CD4-positive, alpha-beta T cell (primary cell): ENCODE measurements at regions of chr17 and their contacts with region 1.

Region 1: DNA sequence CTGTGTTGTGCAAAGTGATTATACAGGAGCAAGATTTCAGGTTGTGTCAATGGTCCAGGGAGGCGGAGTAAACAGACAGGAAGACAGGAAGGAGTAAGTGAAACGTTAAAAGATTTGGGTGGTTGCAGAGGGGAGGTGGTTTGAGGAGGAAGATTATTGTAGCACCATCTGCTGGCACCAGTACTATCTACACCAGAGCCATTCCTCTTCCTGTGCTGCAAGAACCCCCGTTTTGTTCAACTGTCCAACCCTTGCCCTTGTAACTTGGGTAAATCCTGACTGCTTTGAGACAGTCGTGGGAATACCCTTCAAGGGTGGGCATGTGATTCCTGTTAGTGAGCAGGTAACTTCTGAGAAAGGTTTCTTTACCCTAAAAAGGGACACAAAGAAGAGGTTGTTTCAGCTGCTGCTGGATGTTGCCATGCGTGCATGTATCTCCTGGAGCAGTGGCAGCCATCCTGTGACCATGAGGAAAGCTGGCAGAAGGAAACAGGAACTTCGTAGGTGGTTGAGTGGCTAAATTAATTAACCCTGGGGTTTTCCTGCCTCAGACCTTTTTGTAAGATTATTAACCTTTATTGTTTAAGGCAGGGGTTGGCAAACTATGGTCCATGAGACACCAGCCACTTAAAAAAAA is 124.1 kb downstream of the PRKCA start:
- DNase-seq: peak in 13 of 14 experiments; percentile 11 to 81 (median 34)
- ATAC-seq: peak; percentile 98
- H3K4me3 ChIP-seq: no peak overlapping the region
- H3K4me3 Mint-ChIP-seq: peak overlapping the region; percentile 43
- H3K27ac ChIP-seq: no peak overlapping the region
- H3K27ac Mint-ChIP-seq: peak overlapping the region; percentile 59
- H3K4me1 ChIP-seq: peaks cover 26% of the 10 kb centered on the region
- H3K4me1 Mint-ChIP-seq: peaks cover 75% of the 10 kb centered on the region
- H3K27me3 ChIP-seq: no peaks in the 10 kb centered on the region
- H3K27me3 Mint-ChIP-seq: no peaks in the 10 kb centered on the region
- CTCF ChIP-seq: peak; percentile 69

Region 2: DNA sequence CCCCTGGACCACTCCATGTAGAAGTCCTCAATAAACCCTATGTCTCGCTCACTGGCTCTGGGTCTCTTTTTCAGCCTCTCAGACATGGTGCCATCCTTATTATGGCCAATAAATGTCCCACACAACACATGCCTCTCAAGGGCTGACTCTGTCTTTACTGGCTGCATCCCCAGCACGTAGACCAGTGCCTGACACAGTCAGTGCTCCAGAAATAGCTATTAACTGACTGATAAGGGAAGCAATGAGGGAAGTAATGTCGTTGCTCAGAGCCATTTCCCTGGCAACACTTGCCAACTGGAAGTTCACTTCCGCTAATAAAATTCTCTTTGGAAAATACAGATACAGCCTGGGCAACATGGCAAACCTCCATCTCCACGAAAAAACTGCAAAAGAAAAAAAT is 178.2 kb before region 1 on chr17:
- CTCF ChIA-PET with region 1: no interaction called
- POLR2A ChIA-PET with region 1: no interaction called
- intact Hi-C with region 1: loop called in 1 of 2 experiments (anchors 2 kb)
- DNase-seq: no peak
- ATAC-seq: no peak
- H3K4me3 ChIP-seq: no peak overlapping the region
- H3K4me3 Mint-ChIP-seq: no peak overlapping the region
- H3K27ac ChIP-seq: no peak overlapping the region
- H3K27ac Mint-ChIP-seq: peak overlapping the region; percentile 61
- H3K4me1 ChIP-seq: peaks cover 36% of the 10 kb centered on the region
- H3K4me1 Mint-ChIP-seq: peaks cover 38% of the 10 kb centered on the region
- H3K27me3 ChIP-seq: no peaks in the 10 kb centered on the region
- H3K27me3 Mint-ChIP-seq: no peaks in the 10 kb centered on the region
- CTCF ChIP-seq: no peak

Region 3: GRCh38 chr17:66255112-66255511 is 171.4 kb before region 1 on chr17:
- CTCF ChIA-PET with region 1: interaction called, 3 read pairs
- POLR2A ChIA-PET with region 1: interaction called, 3 read pairs
- intact Hi-C with region 1: loop called (anchors 1 kb)
- DNase-seq: peak in 8 of 14 experiments; percentile 21 to 87 (median 42)
- ATAC-seq: peak; percentile 95
- H3K4me3 ChIP-seq: no peak overlapping the region
- H3K4me3 Mint-ChIP-seq: peak overlapping the region; percentile 59
- H3K27ac ChIP-seq: peak overlapping the region in 1 of 2 donors; percentile 15
- H3K27ac Mint-ChIP-seq: peak overlapping the region; percentile 82
- H3K4me1 ChIP-seq: peaks cover 8% of the 10 kb centered on the region
- H3K4me1 Mint-ChIP-seq: peaks cover 23% of the 10 kb centered on the region
- H3K27me3 ChIP-seq: no peaks in the 10 kb centered on the region
- H3K27me3 Mint-ChIP-seq: no peaks in the 10 kb centered on the region
- CTCF ChIP-seq: peak; percentile 82

Region 4: DNA sequence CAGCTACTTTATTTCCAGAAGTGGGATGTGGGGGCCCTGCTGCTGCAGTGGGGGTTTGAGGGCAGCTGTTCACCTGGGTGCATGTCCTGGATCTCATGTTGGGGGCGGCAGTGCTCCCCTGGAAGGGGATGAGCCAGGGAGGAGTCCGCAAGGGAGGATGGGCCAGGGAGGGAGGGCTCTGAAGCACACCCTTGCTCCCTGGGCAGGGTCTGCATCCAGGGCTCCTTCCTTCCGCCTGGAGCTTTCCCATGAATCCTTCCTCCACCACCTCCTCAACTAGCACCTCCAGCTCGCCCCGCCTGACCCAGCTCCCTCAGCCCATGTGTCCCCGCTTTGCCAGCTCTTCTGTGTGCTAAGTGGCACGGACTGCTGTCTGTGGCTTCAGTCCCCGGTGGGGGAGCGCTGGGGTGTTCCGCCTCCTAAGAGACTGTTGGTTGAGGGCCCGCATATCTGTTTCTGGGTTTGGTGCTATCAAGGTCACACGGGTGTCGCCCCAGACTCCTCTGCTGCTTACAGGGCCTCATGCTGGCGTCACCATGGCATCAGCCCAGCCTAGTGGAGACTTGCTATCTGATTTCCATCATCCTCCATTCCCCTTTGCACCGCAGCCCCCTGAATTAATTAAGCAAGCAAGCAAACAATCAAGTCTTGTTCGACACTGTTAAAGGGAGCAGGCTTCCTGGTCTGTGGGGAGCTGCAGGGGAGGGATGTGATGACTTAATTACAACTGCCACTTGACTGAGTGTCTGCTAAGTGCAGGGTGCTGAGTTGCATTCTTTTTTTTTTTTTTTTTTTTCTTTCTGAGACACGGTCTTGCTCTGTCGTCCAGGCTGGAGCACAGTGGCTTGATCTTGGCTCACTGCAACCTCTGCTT is 52.3 kb before region 1 on chr17:
- CTCF ChIA-PET with region 1: no interaction called
- POLR2A ChIA-PET with region 1: no interaction called
- intact Hi-C with region 1: loop called in 1 of 2 experiments (anchors 5 kb)
- DNase-seq: peak; percentile 22 to 72 (median 40)
- ATAC-seq: peak; percentile 91
- H3K4me3 ChIP-seq: no peak overlapping the region
- H3K4me3 Mint-ChIP-seq: peak overlapping the region; percentile 59
- H3K27ac ChIP-seq: no peak overlapping the region
- H3K27ac Mint-ChIP-seq: peak overlapping the region; percentile 79
- H3K4me1 ChIP-seq: peaks cover 23% of the 10 kb centered on the region
- H3K4me1 Mint-ChIP-seq: peaks cover 83% of the 10 kb centered on the region
- H3K27me3 ChIP-seq: no peaks in the 10 kb centered on the region
- H3K27me3 Mint-ChIP-seq: no peaks in the 10 kb centered on the region
- CTCF ChIP-seq: no peak

Region 5: DNA sequence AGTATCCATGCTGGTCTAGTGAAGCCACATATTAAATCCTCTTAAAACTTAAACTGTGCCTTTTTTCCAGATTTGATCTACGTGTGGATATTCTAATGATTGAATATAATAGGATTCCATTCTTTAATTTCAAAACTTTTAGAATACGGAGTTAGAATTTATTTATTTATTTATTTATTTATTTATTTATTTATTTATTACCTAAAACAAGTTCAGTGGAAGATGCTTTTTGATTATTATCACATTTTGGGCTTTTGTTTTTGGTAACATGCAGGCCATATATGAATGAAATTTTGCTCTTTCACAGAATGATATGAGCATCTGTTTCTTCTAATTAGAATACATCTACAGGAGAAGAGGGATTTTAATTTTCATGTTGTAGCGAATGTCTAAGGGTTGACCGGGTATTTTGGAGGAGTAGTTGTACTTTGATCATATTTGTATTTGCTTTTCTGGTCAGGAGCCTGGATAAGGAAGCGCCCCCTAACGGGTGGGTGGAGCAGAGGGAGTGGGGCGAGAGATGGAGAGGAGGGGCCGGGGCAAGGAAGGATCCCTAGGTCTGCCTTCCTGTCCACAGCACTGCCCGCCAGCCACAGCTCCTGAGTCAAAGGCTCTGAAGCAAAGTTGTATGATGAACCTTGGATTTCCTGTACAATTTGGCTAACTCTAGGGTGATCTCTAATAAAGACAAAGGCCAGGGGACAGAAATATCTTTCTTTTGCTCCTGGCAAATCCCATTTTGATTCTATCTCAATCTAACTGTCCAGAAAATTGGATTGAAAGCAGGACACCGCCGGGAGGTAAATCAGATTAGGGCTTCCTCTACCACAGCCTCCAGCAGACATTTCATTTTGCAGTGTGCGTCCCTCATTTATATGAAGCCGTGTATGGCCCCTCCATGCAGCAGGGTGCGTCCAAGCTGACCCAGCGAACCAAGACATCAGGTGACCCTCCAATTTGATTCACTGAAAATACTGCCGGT is 25.0 kb after region 1 on chr17:
- CTCF ChIA-PET with region 1: no interaction called
- POLR2A ChIA-PET with region 1: no interaction called
- intact Hi-C with region 1: no loop called
- DNase-seq: peak in 1 of 14 experiments; percentile 23
- ATAC-seq: no peak
- H3K4me3 ChIP-seq: no peak overlapping the region
- H3K4me3 Mint-ChIP-seq: no peak overlapping the region
- H3K27ac ChIP-seq: no peak overlapping the region
- H3K27ac Mint-ChIP-seq: peak overlapping the region; percentile 79
- H3K4me1 ChIP-seq: peaks cover 2% of the 10 kb centered on the region
- H3K4me1 Mint-ChIP-seq: peaks cover 86% of the 10 kb centered on the region
- H3K27me3 ChIP-seq: no peaks in the 10 kb centered on the region
- H3K27me3 Mint-ChIP-seq: no peaks in the 10 kb centered on the region
- CTCF ChIP-seq: no peak

Region 6: GRCh38 chr17:66533572-66533971 is 107.1 kb after region 1 on chr17:
- CTCF ChIA-PET with region 1: no interaction called
- POLR2A ChIA-PET with region 1: no interaction called
- intact Hi-C with region 1: no loop called
- DNase-seq: no peak
- ATAC-seq: no peak
- H3K4me3 ChIP-seq: no peak overlapping the region
- H3K4me3 Mint-ChIP-seq: no peak overlapping the region
- H3K27ac ChIP-seq: no peak overlapping the region
- H3K27ac Mint-ChIP-seq: no peak overlapping the region
- H3K4me1 ChIP-seq: peaks cover 6% of the 10 kb centered on the region
- H3K4me1 Mint-ChIP-seq: peaks cover 80% of the 10 kb centered on the region
- H3K27me3 ChIP-seq: no peaks in the 10 kb centered on the region
- H3K27me3 Mint-ChIP-seq: no peaks in the 10 kb centered on the region
- CTCF ChIP-seq: no peak

Region 7: GRCh38 chr17:66567234-66568170 is 141.0 kb after region 1 on chr17:
- CTCF ChIA-PET with region 1: no interaction called
- POLR2A ChIA-PET with region 1: no interaction called
- intact Hi-C with region 1: loop called (anchors 1 to 5 kb)
- DNase-seq: peak; percentile 71 to 90 (median 80)
- ATAC-seq: peak; percentile 88
- H3K4me3 ChIP-seq: no peak overlapping the region
- H3K4me3 Mint-ChIP-seq: no peak overlapping the region
- H3K27ac ChIP-seq: no peak overlapping the region
- H3K27ac Mint-ChIP-seq: peak overlapping the region; percentile 7
- H3K4me1 ChIP-seq: peaks cover 5% of the 10 kb centered on the region
- H3K4me1 Mint-ChIP-seq: peaks cover 41% of the 10 kb centered on the region
- H3K27me3 ChIP-seq: no peaks in the 10 kb centered on the region
- H3K27me3 Mint-ChIP-seq: no peaks in the 10 kb centered on the region
- CTCF ChIP-seq: peak; percentile 87

Region 8: GRCh38 chr17:66673668-66674315 is 247.3 kb after region 1 on chr17:
- CTCF ChIA-PET with region 1: interaction called, 3 read pairs
- POLR2A ChIA-PET with region 1: no interaction called
- intact Hi-C with region 1: loop called (anchors 5 to 10 kb)
- DNase-seq: peak; percentile 20 to 90 (median 44)
- ATAC-seq: peak; percentile 84
- H3K4me3 ChIP-seq: no peak overlapping the region
- H3K4me3 Mint-ChIP-seq: peak overlapping the region; percentile 52
- H3K27ac ChIP-seq: peak overlapping the region; percentile 51 to 78
- H3K27ac Mint-ChIP-seq: peak overlapping the region; percentile 88
- H3K4me1 ChIP-seq: peaks cover 22% of the 10 kb centered on the region
- H3K4me1 Mint-ChIP-seq: peaks cover 55% of the 10 kb centered on the region
- H3K27me3 ChIP-seq: no peaks in the 10 kb centered on the region
- H3K27me3 Mint-ChIP-seq: no peaks in the 10 kb centered on the region
- CTCF ChIP-seq: peak; percentile 68

Region 9: GRCh38 chr17:66834918-66835454 is 408.5 kb after region 1 on chr17 and contains the start of gene CACNG5:
- CTCF ChIA-PET with region 1: no interaction called
- POLR2A ChIA-PET with region 1: no interaction called
- intact Hi-C with region 1: no loop called
- DNase-seq: no peak
- ATAC-seq: no peak
- H3K4me3 ChIP-seq: no peak within 1 kb of the TSS
- H3K4me3 Mint-ChIP-seq: no peak within 1 kb of the TSS
- H3K27ac ChIP-seq: no peak within 1 kb of the TSS
- H3K27ac Mint-ChIP-seq: no peak within 1 kb of the TSS
- H3K4me1 ChIP-seq: no peaks in the 10 kb centered on the region
- H3K4me1 Mint-ChIP-seq: no peaks in the 10 kb centered on the region
- H3K27me3 ChIP-seq: peaks cover 30 to 50% of the 10 kb centered on the region in 2 experiments
- H3K27me3 Mint-ChIP-seq: peaks cover 70% of the 10 kb centered on the region
- CTCF ChIP-seq: no peak
- total RNA-seq, gene CACNG5: not detected